Activated CD4-positive, alpha-beta T cell treated with anti-CD3 and anti-CD28 coated beads for 36 hours (primary cell): ENCODE measurements at regions of chr19 and their contacts with region 1.

Region 1: GRCh38 chr19:45584332-45585157 is at the start of gene OPA3:
- DNase-seq: peak; percentile 100
- ATAC-seq: peak; percentile 95
- H3K4me3 Mint-ChIP-seq: peak within 1 kb of the TSS; percentile 87
- H3K27ac Mint-ChIP-seq: peak within 1 kb of the TSS; percentile 93
- H3K4me1 Mint-ChIP-seq: peaks cover 22% of the 10 kb centered on the region
- H3K27me3 Mint-ChIP-seq: peaks cover 2% of the 10 kb centered on the region
- total RNA-seq, gene OPA3: 13.8 to 14.4 TPM

Region 2: GRCh38 chr19:45320997-45321775 is 263.4 kb before region 1 on chr19:
- CTCF ChIA-PET with region 1: no interaction called
- POLR2A ChIA-PET with region 1: no interaction called
- intact Hi-C with region 1: no loop called
- DNase-seq: no peak
- ATAC-seq: no peak
- H3K4me3 Mint-ChIP-seq: no peak overlapping the region
- H3K27ac Mint-ChIP-seq: no peak overlapping the region
- H3K4me1 Mint-ChIP-seq: no peaks in the 10 kb centered on the region
- H3K27me3 Mint-ChIP-seq: peaks cover 24% of the 10 kb centered on the region

Region 3: DNA sequence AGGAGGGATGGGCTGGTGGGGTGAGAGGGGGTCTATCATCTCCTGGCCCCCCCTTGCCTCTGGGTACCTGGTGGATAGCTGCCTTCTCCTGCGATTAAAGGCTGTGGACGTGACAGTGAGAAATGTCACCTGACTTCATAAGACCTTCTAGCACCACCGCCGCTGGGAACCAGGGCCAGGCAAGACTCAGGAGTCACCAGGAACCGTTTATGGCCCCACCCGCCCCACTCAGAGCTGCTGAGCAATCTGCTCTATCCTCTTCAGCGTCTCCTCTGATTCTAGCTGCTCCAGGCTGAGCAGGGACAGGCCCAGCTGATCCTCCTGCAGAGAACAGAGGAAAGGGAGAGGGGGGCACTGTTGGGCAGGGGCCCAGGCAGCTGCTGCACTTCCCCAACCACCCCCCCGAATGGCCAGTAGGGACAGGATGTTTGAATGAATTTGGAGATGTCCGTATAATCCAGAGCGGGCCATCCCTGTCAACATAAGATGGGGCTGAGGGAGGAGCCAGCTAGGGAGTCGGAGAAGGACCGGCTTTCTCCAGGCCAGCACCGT is 233.1 kb before region 1 on chr19:
- CTCF ChIA-PET with region 1: no interaction called
- POLR2A ChIA-PET with region 1: no interaction called
- intact Hi-C with region 1: no loop called
- DNase-seq: no peak
- ATAC-seq: no peak
- H3K4me3 Mint-ChIP-seq: no peak overlapping the region
- H3K27ac Mint-ChIP-seq: no peak overlapping the region
- H3K4me1 Mint-ChIP-seq: no peaks in the 10 kb centered on the region
- H3K27me3 Mint-ChIP-seq: no peaks in the 10 kb centered on the region

Region 4: DNA sequence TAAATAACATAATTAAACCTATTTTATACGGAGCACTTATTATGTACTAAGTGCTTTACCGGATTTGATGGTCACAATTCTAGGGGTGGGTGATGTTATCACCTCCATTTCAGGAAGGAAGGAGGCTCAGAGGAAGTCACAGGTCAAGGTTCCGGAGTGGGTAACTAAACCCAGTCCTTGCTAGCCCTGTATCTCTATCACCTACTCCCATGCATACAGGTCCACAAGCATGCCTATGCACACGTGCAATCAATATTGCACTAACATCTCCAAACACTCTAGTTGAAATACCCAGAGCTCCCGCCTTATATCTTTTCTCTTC is 134.6 kb before region 1 on chr19:
- CTCF ChIA-PET with region 1: no interaction called
- POLR2A ChIA-PET with region 1: no interaction called
- intact Hi-C with region 1: loop called in 1 of 2 experiments (anchors 1 kb)
- DNase-seq: no peak
- ATAC-seq: peak; percentile 24
- H3K4me3 Mint-ChIP-seq: peak overlapping the region; percentile 95
- H3K27ac Mint-ChIP-seq: peak overlapping the region; percentile 97
- H3K4me1 Mint-ChIP-seq: peaks cover 34% of the 10 kb centered on the region
- H3K27me3 Mint-ChIP-seq: no peaks in the 10 kb centered on the region

Region 5: DNA sequence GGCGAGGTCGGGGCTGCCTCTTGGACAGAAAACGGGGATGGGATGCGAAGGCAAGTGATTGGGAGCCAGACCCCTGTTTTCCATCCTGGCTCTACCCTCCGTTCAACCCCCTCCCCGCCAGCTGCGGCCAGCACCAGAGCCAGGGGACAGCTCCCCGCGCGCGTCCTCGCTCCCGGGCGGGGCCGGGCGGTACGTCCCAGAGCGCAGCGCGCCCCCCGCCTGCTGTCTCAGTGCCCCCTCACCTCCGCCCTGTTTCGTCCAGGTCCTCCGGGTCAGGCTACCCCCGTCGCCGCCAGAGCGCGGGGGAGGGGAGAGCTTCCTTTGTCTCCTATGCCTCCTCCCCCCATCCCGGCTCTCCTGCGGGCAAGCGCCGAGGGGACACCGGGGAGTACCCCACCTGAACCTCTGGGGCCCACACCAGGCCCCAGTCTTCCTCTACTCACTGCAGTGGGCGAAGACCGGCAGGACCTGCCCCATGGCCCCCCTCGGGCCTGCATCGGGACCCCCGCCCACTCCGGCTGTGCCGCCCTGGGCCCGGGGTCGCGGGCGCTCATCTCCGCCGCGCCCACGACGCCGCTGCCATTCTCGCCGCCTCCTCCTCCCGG is 88.1 kb before region 1 on chr19:
- CTCF ChIA-PET with region 1: no interaction called
- POLR2A ChIA-PET with region 1: no interaction called
- intact Hi-C with region 1: loop called (anchors 1 to 2 kb)
- DNase-seq: peak; percentile 74
- ATAC-seq: peak; percentile 1
- H3K4me3 Mint-ChIP-seq: peak overlapping the region; percentile 6
- H3K27ac Mint-ChIP-seq: no peak overlapping the region
- H3K4me1 Mint-ChIP-seq: peaks cover 43% of the 10 kb centered on the region
- H3K27me3 Mint-ChIP-seq: peaks cover 31% of the 10 kb centered on the region

Region 6: GRCh38 chr19:45615795-45616708 is 31.5 kb after region 1 on chr19:
- CTCF ChIA-PET with region 1: interaction called, 3 read pairs
- POLR2A ChIA-PET with region 1: interaction called, 5 read pairs
- intact Hi-C with region 1: loop called in 1 of 2 experiments (anchors 1 kb)
- DNase-seq: peak; percentile 95
- ATAC-seq: peak; percentile 86
- H3K4me3 Mint-ChIP-seq: no peak overlapping the region
- H3K27ac Mint-ChIP-seq: peak overlapping the region; percentile 65
- H3K4me1 Mint-ChIP-seq: peaks cover 24% of the 10 kb centered on the region
- H3K27me3 Mint-ChIP-seq: no peaks in the 10 kb centered on the region

Region 7: GRCh38 chr19:45670670-45671453 is 86.3 kb after region 1 on chr19:
- CTCF ChIA-PET with region 1: no interaction called
- POLR2A ChIA-PET with region 1: no interaction called
- intact Hi-C with region 1: loop called in 1 of 2 experiments (anchors 1 kb)
- DNase-seq: peak; percentile 89
- ATAC-seq: peak; percentile 39
- H3K4me3 Mint-ChIP-seq: peak overlapping the region; percentile 18
- H3K27ac Mint-ChIP-seq: no peak overlapping the region
- H3K4me1 Mint-ChIP-seq: peaks cover 24% of the 10 kb centered on the region
- H3K27me3 Mint-ChIP-seq: peaks cover 18% of the 10 kb centered on the region

Region 8: GRCh38 chr19:45770192-45771101 is 185.9 kb after region 1 on chr19:
- CTCF ChIA-PET with region 1: no interaction called
- POLR2A ChIA-PET with region 1: no interaction called
- intact Hi-C with region 1: loop called in 1 of 2 experiments (anchors 1 kb)
- DNase-seq: peak; percentile 93
- ATAC-seq: peak; percentile 68
- H3K4me3 Mint-ChIP-seq: peak overlapping the region; percentile 78
- H3K27ac Mint-ChIP-seq: no peak overlapping the region
- H3K4me1 Mint-ChIP-seq: peaks cover 10% of the 10 kb centered on the region
- H3K27me3 Mint-ChIP-seq: peaks cover 10% of the 10 kb centered on the region

Region 9: DNA sequence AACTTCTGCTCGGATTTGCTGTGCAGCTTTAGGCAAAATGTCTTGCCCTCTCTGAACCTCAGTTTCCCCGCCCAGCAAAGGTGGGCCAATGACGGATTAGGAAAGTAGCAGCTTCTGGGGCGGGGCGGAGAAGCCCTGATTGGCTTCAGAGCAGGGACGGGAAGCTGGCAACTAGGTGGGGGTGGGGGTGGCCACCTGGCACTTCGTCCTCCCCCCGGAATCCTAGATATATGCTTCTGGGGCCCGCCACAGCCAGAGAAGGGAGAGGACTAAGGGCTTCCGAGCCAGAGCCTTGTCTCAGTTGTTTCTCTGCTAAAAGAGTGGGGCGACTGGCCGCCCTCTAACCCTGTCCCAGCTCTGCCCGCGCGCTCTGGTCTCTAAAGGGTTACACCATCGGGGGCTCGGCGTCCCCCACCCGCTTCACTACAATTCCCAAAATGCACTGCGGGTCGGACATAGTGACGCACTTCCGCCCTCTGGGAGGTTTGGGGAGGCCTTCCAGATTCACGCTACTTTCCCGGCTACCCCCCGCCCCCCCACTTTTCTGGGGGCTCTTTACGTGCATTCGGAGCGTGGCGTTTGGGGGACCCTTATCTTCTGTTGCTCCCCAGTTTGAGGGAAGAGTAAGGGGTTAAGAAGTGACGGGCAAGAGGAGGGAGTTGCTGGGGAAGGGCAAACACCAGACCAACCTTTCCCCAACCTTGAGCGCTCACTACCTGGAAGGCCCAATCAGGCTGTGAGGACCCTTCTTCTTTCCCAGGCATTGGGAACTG is 302.1 kb after region 1 on chr19:
- CTCF ChIA-PET with region 1: interaction called, 3 read pairs
- POLR2A ChIA-PET with region 1: no interaction called
- intact Hi-C with region 1: loop called in 1 of 2 experiments (anchors 1 kb)
- DNase-seq: peak; percentile 96
- ATAC-seq: peak; percentile 85
- H3K4me3 Mint-ChIP-seq: peak overlapping the region; percentile 85
- H3K27ac Mint-ChIP-seq: peak overlapping the region; percentile 95
- H3K4me1 Mint-ChIP-seq: peaks cover 17% of the 10 kb centered on the region
- H3K27me3 Mint-ChIP-seq: no peaks in the 10 kb centered on the region